ENCODE measurements at regions of chr17 and their contacts with region 1.

Region 1: GRCh38 chr17:59004338-59005111 is 102.2 kb downstream of the TRIM37 start:
- DNase-seq: no peak
- H3K4me3 ChIP-seq: no peak overlapping the region
- H3K27ac ChIP-seq: peak overlapping the region in 6 of 8 donors; percentile 26 to 85 (median 50)
- H3K4me1 ChIP-seq: peaks cover 5 to 56% (median 37%) of the 10 kb centered on the region in 6 donors
- H3K27me3 ChIP-seq: no peaks in the 10 kb centered on the region
- CTCF ChIP-seq: peak in 10 of 11 experiments; percentile 83 to 97 (median 92)
- POLR2A ChIP-seq: no peak

Region 2: DNA sequence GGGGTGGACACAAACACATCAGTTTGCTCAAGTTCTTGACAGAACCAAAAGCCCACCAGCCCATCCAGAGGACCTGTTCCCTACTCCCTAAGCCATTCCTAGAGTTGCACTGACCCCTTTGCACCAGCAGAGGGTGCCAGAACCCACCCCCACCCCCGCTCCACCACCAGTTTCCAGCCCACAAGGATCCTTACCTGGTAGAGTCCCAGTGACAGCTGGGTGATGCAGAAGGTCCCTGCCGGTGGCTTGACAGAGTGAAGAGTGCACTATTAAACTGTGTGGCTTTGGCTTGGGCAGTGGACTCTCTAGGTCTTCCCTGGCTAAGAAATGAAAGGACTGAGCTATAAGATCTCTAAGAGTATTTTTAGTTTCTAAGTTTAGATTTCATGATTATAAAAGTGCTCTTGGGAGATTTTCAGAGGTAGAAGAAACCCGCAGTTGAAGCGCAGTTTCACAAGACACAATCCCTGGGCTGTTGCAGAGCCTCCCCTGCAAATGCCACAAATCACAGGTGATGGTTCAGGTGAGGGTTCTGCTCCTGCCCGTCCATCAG is 416.7 kb before region 1 on chr17:
- intact Hi-C with region 1: loop called (anchors 5 kb)
- DNase-seq: peak; percentile 81
- H3K4me3 ChIP-seq: no peak overlapping the region
- H3K27ac ChIP-seq: no peak overlapping the region
- H3K4me1 ChIP-seq: peaks cover 0 to 6% (median 4%) of the 10 kb centered on the region in 6 donors
- H3K27me3 ChIP-seq: no peaks in the 10 kb centered on the region
- CTCF ChIP-seq: peak; percentile 66 to 94 (median 87)
- POLR2A ChIP-seq: no peak

Region 3: GRCh38 chr17:58710936-58711775 is 293.4 kb before region 1 on chr17:
- intact Hi-C with region 1: loop called (anchors 5 kb)
- DNase-seq: no peak
- H3K4me3 ChIP-seq: no peak overlapping the region
- H3K27ac ChIP-seq: no peak overlapping the region
- H3K4me1 ChIP-seq: peaks cover 0 to 13% (median 0%) of the 10 kb centered on the region in 6 donors
- H3K27me3 ChIP-seq: no peaks in the 10 kb centered on the region
- CTCF ChIP-seq: peak; percentile 28 to 72 (median 69)
- POLR2A ChIP-seq: no peak

Region 4: GRCh38 chr17:58936295-58936694 is 68.2 kb before region 1 on chr17:
- intact Hi-C with region 1: no loop called
- DNase-seq: no peak
- H3K4me3 ChIP-seq: no peak overlapping the region
- H3K27ac ChIP-seq: no peak overlapping the region
- H3K4me1 ChIP-seq: no peaks in the 10 kb centered on the region
- H3K27me3 ChIP-seq: no peaks in the 10 kb centered on the region
- CTCF ChIP-seq: no peak
- POLR2A ChIP-seq: no peak

Measured in spleen (tissue), 13 donors.